Psoas muscle (tissue), 8 donors: ENCODE measurements at regions of chr17 and their contacts with region 1.

Region 1: GRCh38 chr17:46730679-46731078 is 87.8 kb downstream of the WNT3 start:
- DNase-seq: no peak
- ATAC-seq: no peak
- H3K4me3 ChIP-seq: no peak overlapping the region
- H3K27ac ChIP-seq: no peak overlapping the region
- H3K4me1 ChIP-seq: no peaks in the 10 kb centered on the region
- H3K27me3 ChIP-seq: no peaks in the 10 kb centered on the region
- CTCF ChIP-seq: no peak

Region 2: DNA sequence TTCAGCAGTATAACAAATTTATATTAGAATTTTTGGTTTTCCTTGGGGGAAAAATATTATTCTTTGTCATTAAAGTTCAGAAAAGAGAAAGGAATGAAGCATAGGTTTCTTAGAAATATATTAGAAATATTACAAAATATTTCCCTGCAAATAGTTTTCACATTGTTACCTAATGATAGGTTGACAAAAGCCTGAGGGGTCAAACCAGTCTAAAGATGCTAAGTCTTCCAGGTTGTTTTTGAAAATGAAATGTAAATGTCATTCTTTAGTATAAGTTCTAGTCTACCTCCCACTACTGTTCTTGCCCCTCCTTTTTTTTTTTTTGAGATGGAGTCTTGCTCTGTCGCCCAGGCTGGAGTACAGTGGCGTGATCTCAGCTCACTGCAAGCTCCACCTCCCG is 14.7 kb before region 1 on chr17:
- intact Hi-C with region 1: loop called in 1 of 2 experiments (anchors 1 kb)
- DNase-seq: no peak
- ATAC-seq: no peak
- H3K4me3 ChIP-seq: no peak overlapping the region
- H3K27ac ChIP-seq: no peak overlapping the region
- H3K4me1 ChIP-seq: no peaks in the 10 kb centered on the region
- H3K27me3 ChIP-seq: no peaks in the 10 kb centered on the region
- CTCF ChIP-seq: no peak

Region 3: DNA sequence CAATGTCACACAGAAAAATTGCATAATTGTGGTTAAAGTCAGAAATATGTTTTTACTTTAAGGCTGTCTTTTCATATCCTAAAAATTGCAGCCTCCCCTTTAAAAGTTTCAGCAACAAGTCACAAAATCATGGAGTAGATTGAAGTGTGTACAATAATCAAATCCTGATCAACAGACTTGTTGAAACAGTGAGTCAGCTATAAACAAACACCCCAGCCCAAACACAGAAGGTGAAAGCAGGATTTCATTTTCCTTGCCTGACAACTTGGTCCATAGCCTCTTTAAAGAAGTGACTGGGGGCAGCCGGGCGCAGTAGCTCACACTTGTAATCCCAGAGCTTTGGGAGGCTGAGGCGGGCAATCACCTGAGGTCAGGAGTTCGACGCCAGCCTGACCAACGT is 27.9 kb after region 1 on chr17:
- intact Hi-C with region 1: no loop called
- DNase-seq: no peak
- ATAC-seq: no peak
- H3K4me3 ChIP-seq: no peak overlapping the region
- H3K27ac ChIP-seq: no peak overlapping the region
- H3K4me1 ChIP-seq: no peaks in the 10 kb centered on the region
- H3K27me3 ChIP-seq: no peaks in the 10 kb centered on the region
- CTCF ChIP-seq: no peak

Region 4: GRCh38 chr17:46770818-46771560 is 40.3 kb after region 1 on chr17:
- intact Hi-C with region 1: no loop called
- DNase-seq: peak in 1 of 2 donors; percentile 33
- ATAC-seq: peak; percentile 39 to 64 (median 48)
- H3K4me3 ChIP-seq: peak overlapping the region; percentile 61
- H3K27ac ChIP-seq: no peak overlapping the region
- H3K4me1 ChIP-seq: peaks cover 6% of the 10 kb centered on the region
- H3K27me3 ChIP-seq: peaks cover 0 to 51% (median 16%) of the 10 kb centered on the region in 3 donors
- CTCF ChIP-seq: no peak

Region 5: DNA sequence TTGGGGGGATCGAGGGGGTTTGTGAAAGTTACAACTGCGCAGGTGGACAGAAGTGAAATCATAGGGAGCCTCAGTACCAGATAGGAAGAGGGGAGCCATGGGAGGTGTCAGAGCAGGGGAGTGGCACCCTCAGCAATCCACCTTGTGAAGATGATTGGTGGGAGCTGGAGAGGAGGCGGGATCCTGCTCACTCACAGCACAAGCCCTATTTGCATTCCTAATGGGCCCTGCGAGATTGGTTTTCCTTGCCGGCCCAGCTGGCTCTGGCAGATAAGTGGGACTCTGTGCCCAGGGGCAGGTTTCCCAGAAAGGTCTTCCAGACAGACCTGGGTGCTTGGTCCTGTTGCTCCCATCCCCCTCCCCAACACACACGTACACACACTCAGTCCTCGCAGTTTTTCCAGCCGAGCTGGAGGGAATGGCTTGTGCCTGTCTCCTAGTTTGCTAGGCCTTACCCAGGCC is 78.5 kb after region 1 on chr17:
- intact Hi-C with region 1: no loop called
- DNase-seq: no peak
- ATAC-seq: no peak
- H3K4me3 ChIP-seq: no peak overlapping the region
- H3K27ac ChIP-seq: no peak overlapping the region
- H3K4me1 ChIP-seq: no peaks in the 10 kb centered on the region
- H3K27me3 ChIP-seq: peaks cover 0 to 20% (median 5%) of the 10 kb centered on the region in 3 donors
- CTCF ChIP-seq: no peak

Region 6: DNA sequence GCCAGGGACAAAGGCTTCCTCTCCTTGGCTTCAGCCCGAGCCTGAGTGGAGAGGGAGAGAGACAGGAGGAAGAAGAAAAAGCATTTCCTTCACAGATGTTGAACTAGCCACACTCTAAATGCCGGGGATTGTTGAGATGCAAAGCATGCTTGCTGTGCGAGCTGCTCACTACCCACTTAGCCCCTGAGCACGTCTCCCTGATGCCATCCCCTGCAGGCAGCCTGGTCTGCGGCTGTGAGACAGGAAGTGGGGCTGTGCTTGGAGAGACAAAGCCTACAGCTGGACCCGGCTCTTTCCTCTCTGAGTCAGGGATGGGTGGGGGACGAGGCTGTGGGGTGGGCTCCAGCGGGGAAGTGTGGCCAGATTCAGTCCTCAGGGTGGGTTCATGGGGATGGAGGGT is 134.4 kb after region 1 on chr17:
- intact Hi-C with region 1: no loop called
- DNase-seq: no peak
- ATAC-seq: no peak
- H3K4me3 ChIP-seq: no peak overlapping the region
- H3K27ac ChIP-seq: no peak overlapping the region
- H3K4me1 ChIP-seq: peaks cover 5% of the 10 kb centered on the region
- H3K27me3 ChIP-seq: peaks cover 0 to 31% (median 4%) of the 10 kb centered on the region in 3 donors
- CTCF ChIP-seq: no peak